AG04449 (cell line): ENCODE measurements at regions of chr10 and their contacts with region 1.

Region 1: GRCh38 chr10:125084191-125084613 is 76.2 kb downstream of the CTBP2 start:
- DNase-seq: peak; percentile 76
- H3K4me3 ChIP-seq: no peak overlapping the region
- CTCF ChIP-seq: peak; percentile 48

Region 2: DNA sequence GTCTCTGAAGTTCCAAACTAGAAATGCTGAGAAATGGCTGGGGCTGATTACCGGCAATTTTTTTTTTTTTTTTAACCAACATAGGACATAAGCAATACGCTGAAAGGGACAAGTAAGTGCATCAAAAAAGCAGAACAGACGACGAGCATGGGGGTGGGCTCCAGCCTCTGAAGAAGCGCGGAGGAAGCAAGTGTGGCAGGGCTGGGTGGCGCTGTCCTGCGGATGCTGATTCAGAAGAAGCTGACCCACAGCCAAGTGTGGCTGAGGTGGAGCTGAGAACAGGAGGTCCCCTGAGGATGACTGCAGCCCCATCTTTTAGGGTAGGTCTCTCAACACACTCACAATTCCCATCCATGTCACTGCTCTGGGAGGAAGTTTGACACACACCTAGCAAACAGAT is 10.6 kb after region 1 on chr10:
- CTCF ChIA-PET with region 1: interaction called, 12 read pairs
- POLR2A ChIA-PET with region 1: no interaction called
- DNase-seq: no peak
- H3K4me3 ChIP-seq: no peak overlapping the region
- CTCF ChIP-seq: no peak